ENCODE measurements at regions of chr6 and their contacts with region 1.

Region 1: GRCh38 chr6:166394036-166394892 is 11.5 kb upstream of the MPC1 start:
- DNase-seq: no peak

Region 2: GRCh38 chr6:166275714-166276166 is 118.5 kb before region 1 on chr6:
- intact Hi-C with region 1: loop called in 1 of 2 experiments (anchors 5 kb)
- DNase-seq: peak; percentile 91

Region 3: DNA sequence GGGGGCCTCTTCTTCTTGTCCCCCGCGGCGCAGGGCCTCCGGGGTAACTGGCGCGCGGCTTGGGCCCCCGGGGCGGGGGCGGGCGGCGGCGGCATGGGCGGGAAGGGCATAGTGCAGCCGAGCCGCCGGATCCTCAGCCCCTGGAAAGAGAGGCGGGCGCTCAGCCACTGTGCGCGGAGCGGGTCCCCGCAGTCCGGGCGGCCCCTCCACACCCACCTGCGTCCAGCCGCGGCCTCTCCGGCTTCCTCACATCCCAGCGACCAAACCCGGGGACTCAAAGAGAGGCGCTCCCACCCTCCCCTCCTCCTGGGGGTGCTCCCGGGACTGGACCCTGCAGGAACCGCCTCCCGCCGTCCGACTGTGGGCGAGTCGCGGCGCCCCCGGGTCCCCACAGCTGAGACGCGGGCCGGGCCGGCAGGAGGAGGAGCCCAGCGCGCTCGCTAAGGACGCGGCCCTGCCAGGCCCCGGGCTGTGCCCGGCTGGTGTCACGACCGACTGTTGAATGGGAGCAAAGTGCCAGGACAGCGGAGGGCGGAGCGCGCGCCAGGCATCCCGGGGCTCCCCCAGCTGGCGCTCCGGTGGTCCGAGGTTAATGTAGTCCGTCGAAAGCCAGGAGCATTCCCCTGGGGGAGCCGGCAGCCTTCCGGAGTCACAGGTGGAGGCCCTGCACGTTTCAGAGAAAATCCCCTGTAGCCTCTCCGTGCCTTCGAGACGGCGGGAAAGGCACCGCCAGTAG is 86.1 kb before region 1 on chr6 and contains the start of gene PRR18:
- intact Hi-C with region 1: loop called (anchors 2 to 10 kb)
- DNase-seq: no peak
- total RNA-seq, gene PRR18: 0.95 TPM in 1 of 2 donors, not detected in the other

Region 4: DNA sequence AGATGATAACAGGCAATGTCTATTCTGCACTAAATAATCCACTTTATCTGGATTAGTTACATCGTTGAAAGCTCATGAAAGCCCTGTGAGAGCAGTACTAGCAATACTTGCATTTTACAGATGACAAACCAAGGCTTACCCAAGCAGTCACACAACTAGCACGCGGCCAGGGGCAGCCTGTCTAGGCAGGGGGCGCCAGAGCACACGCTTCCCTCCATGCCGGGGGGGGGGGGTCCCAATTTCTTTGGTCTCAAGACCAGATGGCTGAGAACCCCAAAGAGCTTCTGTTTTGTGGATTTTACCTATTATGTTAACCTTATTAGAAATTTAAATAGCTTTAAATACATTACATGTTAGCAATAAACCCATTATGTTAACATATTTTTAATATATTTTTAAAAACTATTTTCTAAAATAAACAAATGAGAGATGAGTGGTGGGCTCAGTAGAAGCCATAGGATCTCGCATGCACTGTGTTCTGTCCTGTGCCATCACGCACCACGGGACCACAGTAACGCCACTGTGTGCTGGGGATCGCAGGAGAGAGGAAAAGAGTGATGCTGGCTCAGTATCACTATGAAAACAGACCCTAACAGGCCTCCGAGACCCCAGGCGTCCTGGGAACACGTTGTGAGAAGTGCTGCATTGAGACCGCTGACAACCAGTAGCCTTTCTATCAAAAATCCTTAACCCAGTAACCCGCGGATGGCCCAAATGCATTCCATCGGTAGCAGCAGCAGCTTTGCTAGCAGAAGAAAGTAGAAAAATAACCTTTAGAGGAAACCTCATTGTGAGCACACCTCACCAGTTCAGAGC is 80.8 kb before region 1 on chr6:
- intact Hi-C with region 1: loop called (anchors 2 to 10 kb)
- DNase-seq: no peak